GM12878 (cell line): ENCODE measurements at regions of chr4 and their contacts with region 1.

Region 1: GRCh38 chr4:57064811-57065711 is 45.1 kb downstream of the IGFBP7 start:
- DNase-seq: no peak
- ATAC-seq: no peak
- H3K4me3 ChIP-seq: no peak overlapping the region
- H3K27ac ChIP-seq: no peak overlapping the region
- H3K4me1 ChIP-seq: no peaks in the 10 kb centered on the region
- H3K27me3 ChIP-seq: no peaks in the 10 kb centered on the region
- CTCF ChIP-seq: no peak
- EP300 ChIP-seq: no peak
- POLR2A ChIP-seq: no peak
- RAD21 ChIP-seq: no peak

Region 2: DNA sequence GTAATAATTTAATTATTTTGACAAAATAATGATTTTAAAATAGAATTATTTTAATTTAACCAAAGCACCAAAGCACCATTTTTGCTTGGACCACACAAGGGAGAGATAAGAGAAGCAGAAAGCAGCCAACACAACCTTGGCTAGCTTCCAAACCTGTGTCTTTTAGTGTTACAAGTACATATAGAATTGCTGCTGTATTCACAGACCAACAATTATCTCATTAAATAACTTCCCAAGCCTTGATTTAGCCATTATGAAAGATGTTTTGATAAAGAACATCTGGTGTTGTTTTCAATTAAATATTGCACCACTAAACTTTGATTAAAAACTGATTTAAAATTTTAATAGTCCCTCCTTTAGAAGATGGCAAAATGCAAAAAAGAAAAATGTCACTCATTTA is 59.1 kb after region 1 on chr4:
- CTCF ChIA-PET with region 1: no interaction called
- POLR2A ChIA-PET with region 1: no interaction called
- RAD21 ChIA-PET with region 1: no interaction called
- SMC1A ChIA-PET with region 1: no interaction called
- in situ Hi-C with region 1: loop called (anchors 10 kb)
- intact Hi-C with region 1: no loop called
- DNase-seq: no peak
- ATAC-seq: no peak
- H3K4me3 ChIP-seq: no peak overlapping the region
- H3K27ac ChIP-seq: no peak overlapping the region
- H3K4me1 ChIP-seq: no peaks in the 10 kb centered on the region
- H3K27me3 ChIP-seq: no peaks in the 10 kb centered on the region; a peak in 1 of 4 replicates
- CTCF ChIP-seq: no peak
- EP300 ChIP-seq: no peak
- POLR2A ChIP-seq: no peak
- RAD21 ChIP-seq: no peak